Posterior cingulate gyrus (tissue), 11 donors: ENCODE measurements at regions of chr12 and their contacts with region 1.

Region 1: DNA sequence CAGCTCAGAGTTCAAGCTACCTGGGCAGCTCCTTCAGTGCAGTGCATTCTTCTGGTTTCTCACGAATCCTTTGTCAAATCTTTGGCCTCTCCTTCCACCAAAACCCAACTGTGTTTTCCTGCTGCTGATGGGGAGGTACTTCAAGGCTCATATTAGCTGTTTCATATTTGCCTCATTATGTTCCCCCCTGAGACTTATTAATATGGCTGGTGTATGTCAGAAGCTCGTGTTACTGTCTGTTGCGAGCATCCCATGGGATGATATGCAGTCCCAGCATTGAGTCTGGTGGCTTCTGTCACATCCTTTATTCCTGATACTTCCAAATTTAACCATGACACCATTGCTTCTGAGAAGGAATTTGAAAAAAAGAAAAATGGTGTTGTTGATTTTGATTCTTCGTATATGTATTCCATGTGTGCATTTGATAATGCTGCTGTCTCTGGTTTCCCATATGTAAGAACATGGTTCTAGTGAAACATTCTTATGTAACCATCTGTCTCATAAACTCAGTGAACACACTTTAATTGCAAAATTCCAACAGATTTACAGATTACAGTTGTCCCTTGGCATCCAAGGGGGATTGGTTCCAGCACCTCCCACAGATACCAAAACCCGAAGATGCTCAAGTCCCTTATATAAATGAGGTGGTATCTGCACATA is 149.1 kb downstream of the KICS2 start:
- DNase-seq: no peak

Region 2: GRCh38 chr12:63792338-63792737 is 280.7 kb before region 1 on chr12:
- intact Hi-C with region 1: no loop called
- DNase-seq: no peak

Region 3: GRCh38 chr12:63821781-63822251 is 251.2 kb before region 1 on chr12:
- intact Hi-C with region 1: no loop called
- DNase-seq: peak in 2 of 10 donors; percentile 21 to 86

Region 4: GRCh38 chr12:64039281-64039871 is 33.7 kb before region 1 on chr12:
- intact Hi-C with region 1: no loop called
- DNase-seq: no peak

Region 5: GRCh38 chr12:64212119-64212746 is 139.2 kb after region 1 on chr12:
- intact Hi-C with region 1: no loop called
- DNase-seq: no peak

Region 6: DNA sequence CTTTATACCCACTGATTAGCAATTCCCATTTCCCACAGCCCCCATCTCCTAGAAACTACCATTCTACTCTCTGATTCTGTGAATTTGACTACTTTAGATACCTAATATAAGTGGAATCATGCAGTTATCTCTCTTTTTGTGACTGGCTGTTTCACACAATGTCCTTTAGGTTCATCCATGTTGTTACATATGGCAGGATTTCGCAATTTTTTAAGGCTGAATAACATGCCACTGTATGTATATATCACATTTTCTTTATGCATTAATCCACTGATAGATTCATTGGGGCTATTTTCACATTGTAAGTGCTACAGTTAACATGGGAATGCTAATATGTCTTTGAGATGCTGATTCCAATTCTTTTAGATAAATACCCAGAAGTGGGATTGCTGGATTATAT is 367.1 kb after region 1 on chr12:
- intact Hi-C with region 1: loop called (anchors 5 kb)
- DNase-seq: no peak